ENCODE measurements at regions of chr17 and their contacts with region 1.

Region 1: GRCh38 chr17:80101011-80101945 is at the start of gene GAA:
- DNase-seq: peak; percentile 89
- H3K4me3 Mint-ChIP-seq: peak within 1 kb of the TSS; percentile 81
- H3K27ac Mint-ChIP-seq: peak within 1 kb of the TSS; percentile 76
- H3K4me1 Mint-ChIP-seq: peaks cover 29% of the 10 kb centered on the region
- H3K27me3 Mint-ChIP-seq: peaks cover 3% of the 10 kb centered on the region
- total RNA-seq, gene GAA: 16.0 to 18.7 TPM

Region 2: GRCh38 chr17:80008383-80008840 is 92.9 kb before region 1 on chr17:
- CTCF ChIA-PET with region 1: interaction called, 11 read pairs
- POLR2A ChIA-PET with region 1: interaction called, 3 read pairs
- DNase-seq: peak; percentile 79
- H3K4me3 Mint-ChIP-seq: no peak overlapping the region
- H3K27ac Mint-ChIP-seq: no peak overlapping the region
- H3K4me1 Mint-ChIP-seq: peaks cover 3% of the 10 kb centered on the region
- H3K27me3 Mint-ChIP-seq: no peaks in the 10 kb centered on the region

Region 3: DNA sequence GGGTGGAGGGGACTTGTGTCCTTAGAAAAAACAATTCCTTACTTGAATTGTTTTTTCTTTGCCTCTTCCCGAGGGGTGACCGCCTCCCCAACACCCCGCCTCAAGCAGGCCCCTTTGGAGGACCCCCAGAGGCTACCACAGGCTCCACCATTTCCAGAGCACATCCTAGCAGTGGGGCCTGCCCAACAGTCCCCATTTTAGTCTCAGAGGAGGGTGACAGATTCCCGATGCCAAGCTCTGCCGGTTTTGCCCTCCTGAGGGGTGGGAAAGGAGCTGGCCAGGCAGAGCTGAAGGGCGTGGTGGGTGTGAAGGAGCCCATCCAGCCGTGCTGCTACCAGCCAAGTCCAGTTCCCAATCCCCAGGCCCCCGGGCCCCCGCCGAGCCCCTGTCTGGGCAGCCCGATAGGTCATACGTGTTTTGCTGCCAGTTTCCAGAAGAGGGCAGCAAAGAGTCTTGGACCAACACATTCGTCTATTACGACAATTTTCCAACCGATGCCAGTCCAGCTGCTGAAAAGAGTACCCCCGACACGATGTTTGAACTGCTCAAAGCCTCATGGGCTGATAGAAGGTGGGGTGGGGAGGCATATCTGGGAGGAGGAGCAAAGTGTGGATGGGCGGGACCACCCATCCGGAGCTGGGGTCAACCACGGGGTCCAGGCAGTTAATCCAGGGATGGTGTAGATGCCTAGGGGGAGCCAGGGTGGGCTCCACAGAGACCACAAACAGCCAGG is 18.7 kb before region 1 on chr17:
- CTCF ChIA-PET with region 1: interaction called, 26 read pairs
- POLR2A ChIA-PET with region 1: no interaction called
- DNase-seq: peak; percentile 61
- H3K4me3 Mint-ChIP-seq: no peak overlapping the region
- H3K27ac Mint-ChIP-seq: no peak overlapping the region
- H3K4me1 Mint-ChIP-seq: peaks cover 3% of the 10 kb centered on the region
- H3K27me3 Mint-ChIP-seq: peaks cover 9% of the 10 kb centered on the region

Region 4: DNA sequence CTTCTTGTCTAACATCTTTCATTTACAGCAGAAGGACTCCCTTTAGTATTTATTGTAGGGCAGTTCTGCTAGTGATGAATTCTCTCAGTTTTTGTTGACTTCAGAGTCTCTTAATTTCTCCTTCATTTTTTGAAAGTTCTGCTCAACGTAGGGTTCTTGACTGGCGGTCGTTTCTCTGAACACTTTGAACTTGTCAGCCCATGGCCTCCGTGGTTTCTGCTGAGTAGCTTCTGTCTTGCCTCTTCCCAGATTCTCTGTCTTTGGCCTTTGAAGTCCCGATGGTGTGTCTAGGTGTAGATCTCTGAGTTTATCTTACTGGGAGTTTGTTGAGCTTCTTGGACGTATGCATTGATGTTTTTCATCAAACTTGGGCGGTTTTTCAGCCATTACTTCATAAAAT is 13.5 kb after region 1 on chr17:
- CTCF ChIA-PET with region 1: interaction called, 22 read pairs
- POLR2A ChIA-PET with region 1: interaction called, 7 read pairs
- DNase-seq: no peak
- H3K4me3 Mint-ChIP-seq: no peak overlapping the region
- H3K27ac Mint-ChIP-seq: no peak overlapping the region
- H3K4me1 Mint-ChIP-seq: no peaks in the 10 kb centered on the region
- H3K27me3 Mint-ChIP-seq: peaks cover 5% of the 10 kb centered on the region

Region 5: DNA sequence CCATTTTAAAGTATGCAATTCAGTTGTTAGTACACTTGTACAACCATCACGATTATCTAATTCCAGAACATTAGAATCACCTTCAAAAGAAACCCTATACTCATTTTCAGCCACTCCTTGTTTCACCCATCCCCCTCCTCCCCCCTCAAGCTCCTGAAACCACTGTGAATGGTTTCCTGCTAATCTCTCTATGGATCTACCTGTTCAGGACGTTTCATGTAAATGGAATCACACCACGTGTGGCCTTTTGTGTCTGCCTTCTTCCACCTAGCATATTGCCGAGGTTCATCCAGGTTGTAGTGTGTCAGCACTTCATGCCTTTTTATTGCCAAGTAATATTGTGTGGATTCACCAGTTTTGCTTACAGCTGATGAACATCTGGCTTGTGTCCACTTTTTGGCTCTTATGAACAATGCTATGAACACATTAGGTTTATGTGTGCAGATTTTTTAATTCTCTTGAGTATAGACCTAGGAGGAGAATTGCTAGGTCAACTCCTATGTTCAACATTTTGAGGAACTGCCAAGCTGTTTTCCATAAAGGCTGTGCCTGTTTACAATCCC is 27.8 kb after region 1 on chr17:
- CTCF ChIA-PET with region 1: interaction called, 15 read pairs
- POLR2A ChIA-PET with region 1: no interaction called
- DNase-seq: no peak
- H3K4me3 Mint-ChIP-seq: no peak overlapping the region
- H3K27ac Mint-ChIP-seq: no peak overlapping the region
- H3K4me1 Mint-ChIP-seq: no peaks in the 10 kb centered on the region
- H3K27me3 Mint-ChIP-seq: peaks cover 17% of the 10 kb centered on the region

Region 6: DNA sequence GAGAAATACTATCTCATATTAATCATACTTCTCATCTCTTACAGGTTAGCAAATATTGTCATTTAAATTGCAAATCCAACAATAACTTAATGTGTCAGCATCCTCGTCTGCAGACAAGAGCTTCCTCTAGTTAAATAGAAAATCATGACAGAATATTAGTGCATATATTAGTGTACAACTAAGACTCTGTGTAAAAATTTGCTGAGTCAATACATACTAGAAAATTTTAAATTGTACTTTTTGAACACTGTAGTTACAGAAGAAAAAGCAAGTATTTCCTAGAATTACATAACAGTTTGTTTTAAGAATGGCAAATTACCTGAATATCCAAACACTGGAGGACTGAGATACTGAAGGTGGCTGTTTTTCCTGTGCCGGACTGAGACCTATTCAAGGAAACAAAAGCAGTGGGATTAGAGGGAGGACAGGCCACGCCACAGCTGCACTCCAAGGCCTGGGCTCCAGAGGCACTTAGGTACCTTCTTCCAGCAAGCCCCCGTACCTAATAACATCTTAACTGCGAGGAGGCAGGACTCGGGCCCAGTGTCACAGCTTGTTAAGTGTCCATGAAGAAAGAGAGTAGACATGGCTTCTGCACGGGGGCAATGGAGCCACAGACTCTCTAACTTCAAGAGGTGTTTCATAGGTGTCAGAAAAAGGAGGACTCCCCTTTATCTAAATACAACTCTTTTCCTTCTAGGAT is 40.3 kb after region 1 on chr17:
- CTCF ChIA-PET with region 1: interaction called, 23 read pairs
- POLR2A ChIA-PET with region 1: interaction called, 19 read pairs
- DNase-seq: no peak
- H3K4me3 Mint-ChIP-seq: no peak overlapping the region
- H3K27ac Mint-ChIP-seq: no peak overlapping the region
- H3K4me1 Mint-ChIP-seq: peaks cover 38% of the 10 kb centered on the region
- H3K27me3 Mint-ChIP-seq: no peaks in the 10 kb centered on the region

Region 7: GRCh38 chr17:80147035-80147836 is 46.0 kb after region 1 on chr17 and contains the start of gene EIF4A3:
- CTCF ChIA-PET with region 1: interaction called, 23 read pairs
- POLR2A ChIA-PET with region 1: interaction called, 19 read pairs
- DNase-seq: peak; percentile 99
- H3K4me3 Mint-ChIP-seq: peak within 1 kb of the TSS; percentile 87
- H3K27ac Mint-ChIP-seq: peak within 1 kb of the TSS; percentile 84
- H3K4me1 Mint-ChIP-seq: peaks cover 55% of the 10 kb centered on the region
- H3K27me3 Mint-ChIP-seq: no peaks in the 10 kb centered on the region
- total RNA-seq, gene EIF4A3: 109 to 115 TPM

Measured in activated CD4-positive, alpha-beta memory T cell treated with anti-CD3 and anti-CD28 coated beads, Interleukin-2, amount 10 ng/mL, durations not matched to agents 7 days and 5 days (primary cell).